CD8-positive, alpha-beta T cell (primary cell): ENCODE measurements at regions of chr12 and their contacts with region 1.

Region 1: GRCh38 chr12:110048242-110049027 is at the start of gene C12orf76:
- DNase-seq: peak; percentile 76 to 97 (median 91)
- ATAC-seq: peak; percentile 99
- H3K4me3 ChIP-seq: peak within 1 kb of the TSS; percentile 66 to 69
- H3K4me3 Mint-ChIP-seq: peak within 1 kb of the TSS; percentile 89
- H3K27ac ChIP-seq: peak within 1 kb of the TSS; percentile 61 to 83
- H3K27ac Mint-ChIP-seq: peak within 1 kb of the TSS; percentile 90
- H3K4me1 ChIP-seq: peaks cover 21% of the 10 kb centered on the region
- H3K4me1 Mint-ChIP-seq: peaks cover 31% of the 10 kb centered on the region
- H3K27me3 ChIP-seq: no peaks in the 10 kb centered on the region
- H3K27me3 Mint-ChIP-seq: no peaks in the 10 kb centered on the region
- CTCF ChIP-seq: no peak
- total RNA-seq, gene C12orf76: 8.7 to 9.6 TPM

Region 2: DNA sequence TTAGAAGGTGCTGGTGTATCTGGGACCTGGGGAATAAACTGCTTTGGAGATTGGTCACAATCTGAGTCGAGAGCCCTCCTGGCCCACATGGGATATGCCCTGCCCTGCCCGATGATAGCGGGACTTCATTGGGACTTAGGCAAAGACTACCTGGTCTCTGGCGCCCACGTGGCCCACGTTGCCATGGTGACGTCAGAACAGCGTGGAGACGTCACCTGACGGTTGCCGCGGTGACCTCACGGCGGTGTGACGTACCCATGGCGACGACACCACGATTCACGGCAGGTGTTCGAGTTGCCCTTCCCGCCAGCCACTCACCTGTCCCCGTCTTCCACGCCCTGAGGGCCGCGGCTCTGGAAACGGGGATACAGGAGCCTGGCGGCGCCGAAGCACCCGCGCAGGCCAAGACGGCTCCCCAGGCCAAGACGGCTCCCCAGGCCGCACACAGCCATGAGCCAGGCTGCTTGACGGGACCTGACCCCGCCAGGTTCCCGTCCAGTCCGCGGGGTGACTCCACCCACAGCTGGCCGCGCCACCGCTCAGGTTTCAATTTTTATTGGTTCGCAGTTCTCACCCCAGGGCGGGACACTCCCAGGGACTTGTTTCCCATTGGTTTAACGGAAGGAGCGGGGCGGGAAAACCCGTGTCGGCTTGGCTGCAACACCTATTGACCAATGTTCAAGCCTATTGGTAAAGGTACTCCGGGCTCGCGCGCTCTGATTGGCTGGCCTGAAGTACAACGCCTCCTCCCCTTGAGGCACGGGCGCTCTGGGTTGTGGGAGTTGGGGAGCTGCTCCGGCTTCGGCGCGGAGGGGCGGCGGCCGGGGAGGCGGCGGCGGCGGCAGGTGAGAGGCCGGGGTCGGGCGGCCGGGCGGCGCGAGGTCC is 475.2 kb before region 1 on chr12 and contains the starts of genes MMAB and MVK:
- CTCF ChIA-PET with region 1: no interaction called
- POLR2A ChIA-PET with region 1: no interaction called
- intact Hi-C with region 1: loop called in 1 of 2 experiments (anchors 1 kb)
- DNase-seq: peak; percentile 96 to 99 (median 98)
- ATAC-seq: peak; percentile 92
- H3K4me3 ChIP-seq: peak within 1 kb of the TSS; percentile 73 to 82
- H3K4me3 Mint-ChIP-seq: peak within 1 kb of the TSS; percentile 95
- H3K27ac ChIP-seq: peak within 1 kb of the TSS; percentile 95
- H3K27ac Mint-ChIP-seq: peak within 1 kb of the TSS; percentile 96
- H3K4me1 ChIP-seq: peaks cover 16% of the 10 kb centered on the region
- H3K4me1 Mint-ChIP-seq: peaks cover 35% of the 10 kb centered on the region
- H3K27me3 ChIP-seq: no peaks in the 10 kb centered on the region
- H3K27me3 Mint-ChIP-seq: no peaks in the 10 kb centered on the region
- CTCF ChIP-seq: no peak
- total RNA-seq, gene MMAB: 10.2 to 11.7 TPM
- total RNA-seq, gene MVK: 11.5 to 13.9 TPM

Region 3: DNA sequence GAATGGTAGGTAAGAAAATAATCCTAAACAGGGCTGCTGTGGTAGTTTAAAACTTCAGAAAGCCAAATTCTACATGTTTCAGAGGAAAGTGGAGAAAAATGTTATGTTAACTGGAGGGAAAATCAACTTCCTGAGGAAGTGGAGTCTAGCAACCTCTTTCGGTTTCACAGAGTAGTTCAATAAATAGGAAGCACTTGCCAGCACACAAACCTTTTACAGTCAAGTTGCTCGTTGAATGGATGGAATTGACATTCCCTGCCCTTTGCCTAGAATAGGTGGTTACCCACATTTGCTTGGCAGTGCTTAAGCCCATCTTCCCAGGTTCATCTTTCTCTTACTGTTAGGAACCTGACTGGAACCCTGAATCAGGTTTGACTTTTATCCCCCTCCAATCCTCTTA is 33.3 kb before region 1 on chr12:
- CTCF ChIA-PET with region 1: no interaction called
- POLR2A ChIA-PET with region 1: no interaction called
- intact Hi-C with region 1: no loop called
- DNase-seq: peak in 2 of 9 experiments; percentile 47 to 62
- ATAC-seq: peak; percentile 61
- H3K4me3 ChIP-seq: no peak overlapping the region
- H3K4me3 Mint-ChIP-seq: peak overlapping the region; percentile 1
- H3K27ac ChIP-seq: peak overlapping the region; percentile 26 to 63
- H3K27ac Mint-ChIP-seq: peak overlapping the region; percentile 82
- H3K4me1 ChIP-seq: peaks cover 12% of the 10 kb centered on the region
- H3K4me1 Mint-ChIP-seq: peaks cover 30% of the 10 kb centered on the region
- H3K27me3 ChIP-seq: no peaks in the 10 kb centered on the region
- H3K27me3 Mint-ChIP-seq: no peaks in the 10 kb centered on the region
- CTCF ChIP-seq: peak; percentile 54

Region 4: GRCh38 chr12:110065540-110065939 is 17.1 kb after region 1 on chr12:
- CTCF ChIA-PET with region 1: no interaction called
- POLR2A ChIA-PET with region 1: no interaction called
- intact Hi-C with region 1: no loop called
- DNase-seq: no peak
- ATAC-seq: no peak
- H3K4me3 ChIP-seq: no peak overlapping the region
- H3K4me3 Mint-ChIP-seq: no peak overlapping the region
- H3K27ac ChIP-seq: no peak overlapping the region
- H3K27ac Mint-ChIP-seq: no peak overlapping the region
- H3K4me1 ChIP-seq: no peaks in the 10 kb centered on the region
- H3K4me1 Mint-ChIP-seq: no peaks in the 10 kb centered on the region
- H3K27me3 ChIP-seq: no peaks in the 10 kb centered on the region
- H3K27me3 Mint-ChIP-seq: no peaks in the 10 kb centered on the region
- CTCF ChIP-seq: no peak

Region 5: DNA sequence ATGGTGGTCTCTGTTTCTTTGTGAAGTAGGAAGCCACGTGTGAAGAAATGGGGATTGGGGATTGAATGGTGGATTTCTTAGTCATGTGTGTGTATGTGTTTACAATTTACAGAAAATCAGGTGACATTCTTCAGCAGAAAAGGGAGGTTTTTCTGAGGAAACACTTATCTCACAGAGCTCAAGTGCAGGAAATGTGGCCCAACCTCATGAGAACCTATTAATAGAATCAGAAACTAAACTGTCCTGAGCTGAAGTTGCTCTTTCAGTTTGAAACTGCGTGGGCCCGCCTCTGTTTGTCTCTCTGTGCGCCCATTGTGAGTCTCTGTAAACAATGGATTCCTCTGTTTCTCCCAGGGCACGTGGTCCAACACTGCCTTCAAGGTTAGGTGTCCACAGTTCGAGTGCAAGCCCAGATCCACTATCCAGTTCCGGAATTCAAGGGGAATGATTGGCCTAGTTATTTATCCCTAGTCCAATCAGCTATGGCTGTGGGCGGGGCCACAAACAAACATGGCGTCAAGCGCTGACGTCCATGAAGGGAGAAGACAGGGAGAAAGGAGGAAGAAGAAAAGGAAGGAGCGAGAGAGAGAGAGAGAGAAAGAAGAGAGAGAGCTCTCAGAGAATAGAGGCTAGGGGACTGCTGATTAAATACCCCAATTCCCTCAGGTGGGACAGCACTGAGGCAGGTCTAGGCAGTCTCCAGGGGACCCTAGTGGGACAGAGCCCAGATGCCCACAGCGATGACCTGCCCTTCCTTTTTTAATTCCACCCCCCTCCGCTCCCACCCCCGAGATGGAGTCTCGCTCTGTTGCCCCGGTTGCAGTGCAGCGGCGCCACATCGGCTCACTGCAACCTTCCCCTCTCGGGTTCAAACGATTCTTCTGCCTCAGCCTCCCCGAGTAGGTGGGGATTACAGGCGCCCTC is 31.3 kb after region 1 on chr12:
- CTCF ChIA-PET with region 1: interaction called, 3 read pairs
- POLR2A ChIA-PET with region 1: no interaction called
- intact Hi-C with region 1: loop called (anchors 1 to 2 kb)
- DNase-seq: peak; percentile 49 to 90 (median 74)
- ATAC-seq: peak; percentile 90
- H3K4me3 ChIP-seq: peak overlapping the region; percentile 44 to 57
- H3K4me3 Mint-ChIP-seq: peak overlapping the region; percentile 83
- H3K27ac ChIP-seq: peak overlapping the region; percentile 68 to 96
- H3K27ac Mint-ChIP-seq: peak overlapping the region; percentile 97
- H3K4me1 ChIP-seq: peaks cover 17% of the 10 kb centered on the region
- H3K4me1 Mint-ChIP-seq: peaks cover 20% of the 10 kb centered on the region
- H3K27me3 ChIP-seq: no peaks in the 10 kb centered on the region
- H3K27me3 Mint-ChIP-seq: no peaks in the 10 kb centered on the region
- CTCF ChIP-seq: no peak

Region 6: DNA sequence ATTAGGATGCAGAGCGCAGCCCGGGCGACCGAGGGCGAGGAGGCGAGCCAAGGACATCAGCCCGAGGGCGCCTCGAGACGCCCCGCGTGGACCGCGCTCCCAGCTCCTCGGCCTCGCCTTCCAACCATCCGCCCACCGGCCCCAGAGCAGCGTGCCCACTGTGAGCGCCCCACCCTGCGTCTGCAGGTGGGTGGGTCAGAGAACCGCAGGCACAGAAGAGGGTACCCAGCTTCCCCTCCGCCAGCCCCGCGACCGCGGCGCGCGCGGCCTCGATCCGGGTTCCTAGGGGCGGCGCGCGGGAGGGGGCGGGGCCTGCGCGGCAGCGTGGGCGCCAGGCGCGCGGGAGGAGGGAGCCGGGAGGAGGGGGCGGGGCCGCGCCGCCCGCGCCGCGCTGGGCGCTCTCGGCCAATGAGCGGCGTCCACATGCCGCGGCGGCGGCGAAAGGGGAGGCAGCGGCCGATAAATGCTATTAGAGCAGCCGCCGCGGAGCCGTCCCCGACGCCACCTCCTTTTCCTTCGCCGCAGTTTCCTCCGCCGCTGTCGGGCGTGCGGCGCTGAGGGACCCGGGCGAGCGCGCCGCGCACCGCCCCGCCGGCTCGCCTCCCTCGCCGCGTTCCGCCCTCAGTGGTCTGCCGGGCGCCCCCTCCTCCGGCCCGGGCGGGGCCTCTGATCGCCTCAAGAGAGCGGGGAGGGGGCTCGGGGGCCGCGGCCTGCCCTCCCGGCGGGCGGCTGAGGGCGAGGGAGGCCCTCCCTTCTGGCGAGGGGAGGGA is 232.5 kb after region 1 on chr12 and contains the start of gene ATP2A2:
- CTCF ChIA-PET with region 1: no interaction called
- POLR2A ChIA-PET with region 1: no interaction called
- intact Hi-C with region 1: loop called in 1 of 2 experiments (anchors 1 kb)
- DNase-seq: peak; percentile 75 to 97 (median 90)
- ATAC-seq: peak; percentile 89
- H3K4me3 ChIP-seq: peak within 1 kb of the TSS; percentile 60 to 82
- H3K4me3 Mint-ChIP-seq: peak within 1 kb of the TSS; percentile 91
- H3K27ac ChIP-seq: peak within 1 kb of the TSS; percentile 70 to 77
- H3K27ac Mint-ChIP-seq: peak within 1 kb of the TSS; percentile 94
- H3K4me1 ChIP-seq: peaks cover 35% of the 10 kb centered on the region
- H3K4me1 Mint-ChIP-seq: peaks cover 46% of the 10 kb centered on the region
- H3K27me3 ChIP-seq: no peaks in the 10 kb centered on the region
- H3K27me3 Mint-ChIP-seq: no peaks in the 10 kb centered on the region
- CTCF ChIP-seq: no peak
- total RNA-seq, gene ATP2A2: 100 to 105 TPM

Region 7: DNA sequence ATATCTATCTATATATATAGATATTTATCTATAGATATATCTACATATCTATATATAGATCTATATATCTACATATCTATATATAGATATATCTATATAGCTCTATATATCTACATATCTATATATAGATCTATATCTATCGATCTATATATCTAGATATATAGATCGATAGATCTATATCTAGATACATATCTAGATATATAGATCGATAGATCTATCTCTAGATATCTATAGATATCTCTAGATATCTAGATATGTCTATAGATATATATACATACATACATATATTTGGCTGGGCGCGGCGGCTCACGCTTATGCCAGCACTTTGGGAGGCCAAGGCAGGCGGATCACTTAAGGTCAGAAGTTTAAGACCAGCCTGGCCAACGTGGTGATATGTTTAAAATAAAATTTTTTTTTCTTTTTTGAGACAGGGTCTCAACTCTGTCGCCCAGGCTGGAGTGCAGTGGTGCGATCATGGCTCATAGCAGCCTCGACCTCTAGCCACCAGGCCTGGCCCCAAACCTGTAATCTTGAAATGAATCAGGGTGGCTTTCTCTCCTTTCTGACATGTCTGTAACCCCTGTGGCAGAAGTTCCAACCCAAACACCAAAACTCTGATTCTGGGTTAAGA is 383.6 kb after region 1 on chr12:
- CTCF ChIA-PET with region 1: no interaction called
- POLR2A ChIA-PET with region 1: no interaction called
- intact Hi-C with region 1: loop called in 1 of 2 experiments (anchors 5 kb)
- DNase-seq: no peak
- ATAC-seq: no peak
- H3K4me3 ChIP-seq: peak overlapping the region in 1 of 2 experiments; percentile 50
- H3K4me3 Mint-ChIP-seq: no peak overlapping the region
- H3K27ac ChIP-seq: no peak overlapping the region
- H3K27ac Mint-ChIP-seq: no peak overlapping the region
- H3K4me1 ChIP-seq: no peaks in the 10 kb centered on the region
- H3K4me1 Mint-ChIP-seq: peaks cover 2% of the 10 kb centered on the region
- H3K27me3 ChIP-seq: no peaks in the 10 kb centered on the region
- H3K27me3 Mint-ChIP-seq: no peaks in the 10 kb centered on the region
- CTCF ChIP-seq: no peak